ENCODE measurements at regions of chr9 and their contacts with region 1.

Region 1: GRCh38 chr9:32579706-32580331 is 6.9 kb upstream of the NDUFB6 start:
- DNase-seq: peak; percentile 74
- H3K4me3 ChIP-seq: no peak overlapping the region
- H3K27ac ChIP-seq: no peak overlapping the region
- H3K4me1 ChIP-seq: no peaks in the 10 kb centered on the region
- H3K27me3 ChIP-seq: no peaks in the 10 kb centered on the region
- CTCF ChIP-seq: peak; percentile 77 to 92 (median 88)
- EP300 ChIP-seq: no peak
- POLR2A ChIP-seq: no peak

Region 2: DNA sequence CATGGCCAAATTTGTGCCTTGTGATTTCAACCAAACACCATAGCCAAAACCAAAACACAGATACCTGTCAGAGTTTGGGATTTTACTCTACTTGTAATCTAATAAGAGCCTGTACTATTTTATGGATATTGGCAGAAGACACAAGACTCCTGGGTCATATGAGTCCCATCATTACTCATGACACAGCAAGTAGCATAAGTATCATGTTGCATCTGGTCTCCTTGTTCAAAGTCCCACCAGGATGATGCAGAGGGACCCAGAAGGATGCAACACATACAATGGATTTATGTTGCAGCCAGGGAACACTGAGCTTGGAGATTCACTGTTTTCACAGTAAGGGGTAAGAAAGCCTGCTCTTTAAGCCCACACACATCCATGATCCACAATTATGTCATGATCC is 208.5 kb before region 1 on chr9:
- in situ Hi-C with region 1: loop called in 1 of 4 experiments (anchors 5 kb)
- intact Hi-C with region 1: no loop called
- DNase-seq: no peak
- H3K4me3 ChIP-seq: no peak overlapping the region
- H3K27ac ChIP-seq: no peak overlapping the region
- H3K4me1 ChIP-seq: no peaks in the 10 kb centered on the region
- H3K27me3 ChIP-seq: no peaks in the 10 kb centered on the region
- CTCF ChIP-seq: no peak
- EP300 ChIP-seq: no peak
- POLR2A ChIP-seq: no peak

Region 3: DNA sequence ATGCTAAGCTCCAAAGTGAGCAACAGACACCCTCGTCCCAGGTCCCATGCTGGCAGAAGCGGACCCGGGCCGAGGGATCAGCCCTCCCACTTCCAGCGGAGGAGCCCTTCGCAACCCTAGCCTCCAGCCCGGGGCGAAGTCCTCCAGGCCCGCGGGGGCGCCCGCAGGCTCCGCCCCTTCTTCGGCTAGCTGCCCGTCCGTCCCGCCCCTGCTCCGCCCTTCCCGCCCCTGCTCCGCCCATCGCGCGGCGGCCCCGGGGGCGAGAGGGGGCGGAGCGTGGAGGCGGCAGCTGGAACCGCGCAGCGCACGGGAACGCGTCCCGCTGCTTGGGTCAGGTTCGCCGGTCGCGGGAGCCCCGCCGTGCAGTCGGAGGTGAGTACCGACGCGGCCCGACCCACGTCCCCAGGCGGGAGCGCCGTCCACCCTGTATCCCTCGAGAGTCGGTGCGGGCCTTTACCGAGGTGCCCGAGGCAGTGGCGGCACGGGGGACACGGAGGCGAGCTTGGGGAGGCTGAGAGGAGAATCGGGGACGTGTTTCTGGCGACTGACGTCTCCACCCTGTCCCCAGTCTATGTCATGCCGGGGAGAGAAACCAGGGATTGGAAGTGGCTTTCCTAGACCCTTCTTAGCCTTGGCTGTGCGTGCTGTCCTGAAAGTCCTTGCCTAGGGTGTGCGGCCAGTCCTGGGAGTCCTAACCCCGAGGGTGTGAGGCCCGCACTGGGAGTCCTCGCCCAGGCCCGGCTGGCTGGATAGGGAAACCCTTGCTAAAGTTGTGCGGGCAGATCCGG is 195.3 kb before region 1 on chr9 and contains the start of gene ACO1:
- in situ Hi-C with region 1: loop called in 3 of 4 experiments (anchors 5 to 10 kb)
- intact Hi-C with region 1: no loop called
- DNase-seq: peak; percentile 95
- H3K4me3 ChIP-seq: peak within 1 kb of the TSS; percentile 26 to 73 (median 64)
- H3K27ac ChIP-seq: peak within 1 kb of the TSS; percentile 84 to 90 (median 87)
- H3K4me1 ChIP-seq: peaks cover 0 to 21% (median 12%) of the 10 kb centered on the region in 4 donors
- H3K27me3 ChIP-seq: peaks cover 9% of the 10 kb centered on the region
- CTCF ChIP-seq: no peak
- EP300 ChIP-seq: no peak
- POLR2A ChIP-seq: peak; percentile 81
- total RNA-seq, gene ACO1: 10.1 to 34.5 (median 27.3) TPM

Region 4: GRCh38 chr9:32618261-32618660 is 38.4 kb after region 1 on chr9:
- in situ Hi-C with region 1: no loop called
- intact Hi-C with region 1: no loop called
- DNase-seq: no peak
- H3K4me3 ChIP-seq: no peak overlapping the region
- H3K27ac ChIP-seq: no peak overlapping the region
- H3K4me1 ChIP-seq: no peaks in the 10 kb centered on the region
- H3K27me3 ChIP-seq: peaks cover 7% of the 10 kb centered on the region
- CTCF ChIP-seq: no peak
- EP300 ChIP-seq: no peak
- POLR2A ChIP-seq: no peak

Region 5: GRCh38 chr9:32968101-32969011 is 388.5 kb after region 1 on chr9:
- in situ Hi-C with region 1: loop called (anchors 5 to 25 kb)
- intact Hi-C with region 1: loop called (anchors 10 kb)
- DNase-seq: peak; percentile 47
- H3K4me3 ChIP-seq: no peak overlapping the region
- H3K27ac ChIP-seq: no peak overlapping the region
- H3K4me1 ChIP-seq: no peaks in the 10 kb centered on the region
- H3K27me3 ChIP-seq: no peaks in the 10 kb centered on the region
- CTCF ChIP-seq: peak; percentile 70 to 87 (median 82)
- EP300 ChIP-seq: no peak
- POLR2A ChIP-seq: no peak

Measured in transverse colon (tissue), 4 donors.